Breast epithelium (tissue), 4 donors: ENCODE measurements at regions of chr2 and their contacts with region 1.

Region 1: GRCh38 chr2:1175751-1176150 is 225.1 kb downstream of the SNTG2 start:
- DNase-seq: no peak
- H3K4me3 ChIP-seq: no peak overlapping the region
- H3K27ac ChIP-seq: no peak overlapping the region
- H3K4me1 ChIP-seq: no peaks in the 10 kb centered on the region
- H3K27me3 ChIP-seq: peaks cover 0 to 9% of the 10 kb centered on the region in 2 donors
- CTCF ChIP-seq: no peak
- POLR2A ChIP-seq: no peak

Region 2: DNA sequence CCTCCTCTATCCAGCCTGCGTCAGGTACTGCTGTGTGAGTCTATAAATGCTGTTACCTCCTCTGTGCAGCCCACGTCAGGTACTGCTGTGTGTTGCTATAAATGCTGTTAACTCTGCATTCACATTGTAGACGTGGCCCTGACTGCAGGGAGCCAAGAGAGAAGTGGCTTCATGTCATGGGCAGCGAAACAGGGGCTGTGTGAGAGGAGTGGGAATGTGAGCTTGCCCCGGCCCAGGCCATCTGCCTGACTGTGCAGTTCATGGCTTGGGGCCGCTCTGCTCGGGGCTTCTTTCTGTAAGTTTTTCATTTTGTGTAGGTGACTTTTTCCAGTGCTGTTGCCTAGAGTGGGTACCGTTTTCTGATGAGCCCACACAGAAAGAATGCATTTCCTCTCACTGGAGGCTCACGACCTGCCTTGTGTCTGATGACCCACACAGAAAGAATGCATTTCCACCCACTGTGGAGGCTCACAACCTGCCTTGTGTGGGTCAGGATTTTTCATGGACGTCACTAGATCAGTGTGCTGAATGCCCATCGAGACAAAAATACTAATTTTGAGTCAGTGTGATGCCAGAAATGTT is 120.6 kb before region 1 on chr2:
- intact Hi-C with region 1: no loop called
- DNase-seq: no peak
- H3K4me3 ChIP-seq: no peak overlapping the region
- H3K27ac ChIP-seq: no peak overlapping the region
- H3K4me1 ChIP-seq: no peaks in the 10 kb centered on the region
- H3K27me3 ChIP-seq: no peaks in the 10 kb centered on the region
- CTCF ChIP-seq: no peak
- POLR2A ChIP-seq: no peak

Region 3: GRCh38 chr2:1162768-1163584 is 12.8 kb before region 1 on chr2:
- intact Hi-C with region 1: no loop called
- DNase-seq: no peak
- H3K4me3 ChIP-seq: no peak overlapping the region
- H3K27ac ChIP-seq: peak overlapping the region in 1 of 2 donors; percentile 72
- H3K4me1 ChIP-seq: no peaks in the 10 kb centered on the region
- H3K27me3 ChIP-seq: no peaks in the 10 kb centered on the region
- CTCF ChIP-seq: no peak
- POLR2A ChIP-seq: no peak

Region 4: DNA sequence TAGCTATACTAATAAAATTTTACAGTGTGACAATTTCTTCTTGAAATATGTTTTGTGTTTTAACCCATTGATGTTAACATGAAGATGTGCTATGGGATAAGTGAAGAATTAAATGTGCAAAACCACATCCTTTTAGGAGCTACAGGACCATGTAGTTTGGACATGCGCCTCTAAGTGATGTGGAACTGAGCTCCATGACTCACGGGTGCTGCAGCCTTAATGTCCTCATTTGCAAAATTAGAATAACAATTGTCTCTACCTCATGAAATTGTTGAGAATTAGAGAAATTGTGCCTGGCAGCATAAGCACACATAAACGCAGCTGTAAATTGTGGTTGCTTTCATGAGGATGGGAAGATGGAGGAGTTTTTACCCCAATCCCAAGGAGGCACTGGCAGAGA is 205.9 kb after region 1 on chr2:
- intact Hi-C with region 1: loop called (anchors 5 kb)
- DNase-seq: no peak
- H3K4me3 ChIP-seq: no peak overlapping the region
- H3K27ac ChIP-seq: no peak overlapping the region
- H3K4me1 ChIP-seq: no peaks in the 10 kb centered on the region
- H3K27me3 ChIP-seq: no peaks in the 10 kb centered on the region
- CTCF ChIP-seq: no peak
- POLR2A ChIP-seq: no peak

Region 5: GRCh38 chr2:1900736-1901135 is 725.0 kb after region 1 on chr2:
- intact Hi-C with region 1: no loop called
- DNase-seq: no peak
- H3K4me3 ChIP-seq: no peak overlapping the region
- H3K27ac ChIP-seq: no peak overlapping the region
- H3K4me1 ChIP-seq: no peaks in the 10 kb centered on the region
- H3K27me3 ChIP-seq: peaks cover 0 to 3% of the 10 kb centered on the region in 2 donors
- CTCF ChIP-seq: no peak
- POLR2A ChIP-seq: no peak

Region 6: GRCh38 chr2:2557475-2557874 is 1381.7 kb after region 1 on chr2:
- intact Hi-C with region 1: no loop called
- DNase-seq: no peak
- H3K4me3 ChIP-seq: no peak overlapping the region
- H3K27ac ChIP-seq: no peak overlapping the region
- H3K4me1 ChIP-seq: no peaks in the 10 kb centered on the region
- H3K27me3 ChIP-seq: no peaks in the 10 kb centered on the region
- CTCF ChIP-seq: no peak
- POLR2A ChIP-seq: no peak